Activated CD4-positive, alpha-beta memory T cell treated with anti-CD3 and anti-CD28 coated beads for 36 hours (primary cell): ENCODE measurements at regions of chr4 and their contacts with region 1.

Region 1: DNA sequence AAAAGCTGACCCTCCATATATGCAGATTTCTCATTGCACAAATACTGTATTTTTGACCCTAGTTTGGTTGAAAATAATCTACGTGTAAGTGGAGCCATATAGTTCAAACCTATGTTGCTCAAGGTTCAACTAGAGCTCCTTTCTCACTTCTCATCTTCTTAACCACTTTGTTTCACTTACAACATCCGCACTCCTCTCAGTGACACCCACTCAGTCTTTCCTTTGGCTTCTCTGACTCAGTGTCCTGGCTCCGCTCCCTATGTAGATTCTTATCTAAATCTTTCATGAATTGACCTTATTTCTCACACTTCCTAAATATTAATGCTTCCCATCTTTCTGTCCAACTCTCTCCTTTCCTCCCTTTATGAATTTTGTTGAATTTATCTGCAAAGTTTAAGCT is 32.9 kb upstream of the DKK2 start:
- DNase-seq: peak; percentile 12
- H3K4me3 Mint-ChIP-seq: no peak overlapping the region
- H3K27ac Mint-ChIP-seq: no peak overlapping the region
- H3K4me1 Mint-ChIP-seq: no peaks in the 10 kb centered on the region
- H3K27me3 Mint-ChIP-seq: no peaks in the 10 kb centered on the region

Region 2: GRCh38 chr4:106614441-106614840 is 454.6 kb before region 1 on chr4:
- CTCF ChIA-PET with region 1: no interaction called
- POLR2A ChIA-PET with region 1: no interaction called
- intact Hi-C with region 1: no loop called
- DNase-seq: no peak
- H3K4me3 Mint-ChIP-seq: no peak overlapping the region
- H3K27ac Mint-ChIP-seq: no peak overlapping the region
- H3K4me1 Mint-ChIP-seq: no peaks in the 10 kb centered on the region
- H3K27me3 Mint-ChIP-seq: no peaks in the 10 kb centered on the region

Region 3: DNA sequence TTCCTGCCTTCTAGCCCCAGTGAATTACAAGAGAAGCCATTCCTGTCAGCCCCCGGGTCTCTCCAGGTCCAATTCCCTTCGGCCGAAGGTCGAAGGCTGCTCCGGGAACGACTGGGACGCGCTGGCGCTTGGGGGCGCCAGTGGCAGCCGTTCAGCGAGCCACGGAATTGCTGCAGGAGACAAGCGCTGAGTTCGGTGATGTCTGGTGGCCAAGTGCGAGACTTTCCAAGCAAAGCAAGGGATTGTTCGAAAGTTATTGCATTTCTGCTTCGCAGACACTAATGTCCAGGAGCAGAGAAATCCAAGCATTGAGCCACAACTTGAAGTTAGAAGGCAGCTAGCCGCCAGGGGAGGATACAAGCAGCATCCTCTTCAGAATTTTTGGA is 31.9 kb before region 1 on chr4:
- CTCF ChIA-PET with region 1: no interaction called
- POLR2A ChIA-PET with region 1: no interaction called
- intact Hi-C with region 1: loop called (anchors 1 kb)
- DNase-seq: peak; percentile 19
- H3K4me3 Mint-ChIP-seq: no peak overlapping the region
- H3K27ac Mint-ChIP-seq: no peak overlapping the region
- H3K4me1 Mint-ChIP-seq: peaks cover 27% of the 10 kb centered on the region
- H3K27me3 Mint-ChIP-seq: peaks cover 58% of the 10 kb centered on the region

Region 4: GRCh38 chr4:107050525-107051135 is 18.4 kb before region 1 on chr4:
- CTCF ChIA-PET with region 1: no interaction called
- POLR2A ChIA-PET with region 1: no interaction called
- intact Hi-C with region 1: no loop called
- DNase-seq: no peak
- H3K4me3 Mint-ChIP-seq: no peak overlapping the region
- H3K27ac Mint-ChIP-seq: no peak overlapping the region
- H3K4me1 Mint-ChIP-seq: no peaks in the 10 kb centered on the region
- H3K27me3 Mint-ChIP-seq: no peaks in the 10 kb centered on the region